Breast epithelium (tissue), 4 donors: ENCODE measurements at regions of chr2 and their contacts with region 1.

Region 1: DNA sequence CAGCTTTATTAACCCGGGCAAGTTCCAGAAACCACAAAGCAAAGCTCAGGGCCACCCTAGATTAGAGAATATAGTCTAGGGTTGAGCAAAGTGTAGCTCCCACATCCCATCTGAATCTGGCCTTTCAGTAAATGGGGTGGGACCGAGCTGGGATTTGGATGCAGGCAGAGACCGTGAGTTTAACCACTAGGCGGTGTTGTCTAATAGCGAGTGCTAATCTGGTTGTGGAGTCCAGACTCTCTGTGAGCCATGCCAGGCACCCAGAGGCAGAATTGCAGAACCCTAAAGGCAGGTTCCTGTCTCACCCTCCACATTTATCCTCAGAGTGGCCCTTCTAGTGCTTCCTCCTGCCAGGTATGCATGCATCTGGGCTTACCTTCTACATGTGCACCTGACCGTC is 435.9 kb downstream of the TSN start:
- DNase-seq: no peak
- H3K4me3 ChIP-seq: no peak overlapping the region
- H3K27ac ChIP-seq: no peak overlapping the region
- H3K4me1 ChIP-seq: no peaks in the 10 kb centered on the region
- H3K27me3 ChIP-seq: no peaks in the 10 kb centered on the region
- CTCF ChIP-seq: no peak
- POLR2A ChIP-seq: no peak

Region 2: GRCh38 chr2:121839584-121839983 is 351.8 kb before region 1 on chr2:
- intact Hi-C with region 1: loop called (anchors 5 kb)
- DNase-seq: no peak
- H3K4me3 ChIP-seq: no peak overlapping the region
- H3K27ac ChIP-seq: no peak overlapping the region
- H3K4me1 ChIP-seq: no peaks in the 10 kb centered on the region
- H3K27me3 ChIP-seq: no peaks in the 10 kb centered on the region
- CTCF ChIP-seq: no peak
- POLR2A ChIP-seq: no peak

Region 3: GRCh38 chr2:123546353-123546752 is 1355.0 kb after region 1 on chr2:
- intact Hi-C with region 1: loop called (anchors 5 kb)
- DNase-seq: no peak
- H3K4me3 ChIP-seq: no peak overlapping the region
- H3K27ac ChIP-seq: no peak overlapping the region
- H3K4me1 ChIP-seq: no peaks in the 10 kb centered on the region
- H3K27me3 ChIP-seq: no peaks in the 10 kb centered on the region
- CTCF ChIP-seq: no peak
- POLR2A ChIP-seq: no peak

Region 4: DNA sequence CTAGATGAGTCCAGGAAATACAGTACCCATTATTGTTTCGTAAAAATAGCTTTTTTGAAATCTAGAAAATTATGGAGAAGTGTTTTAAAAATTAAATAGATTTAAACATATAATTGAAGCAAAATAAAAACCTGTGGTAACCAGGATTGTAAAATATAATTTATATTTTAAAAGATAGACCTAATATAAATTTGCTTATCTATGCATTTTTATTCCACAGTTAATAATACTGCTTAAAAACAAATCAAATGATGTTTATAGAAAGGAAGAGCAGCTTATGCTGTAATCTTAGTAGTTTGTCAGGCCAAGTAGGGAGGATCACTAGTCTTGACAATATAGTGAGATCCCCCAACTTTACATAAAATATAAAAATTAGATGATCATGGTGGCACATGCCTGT is 1444.9 kb after region 1 on chr2:
- intact Hi-C with region 1: loop called (anchors 10 kb)
- DNase-seq: no peak
- H3K4me3 ChIP-seq: no peak overlapping the region
- H3K27ac ChIP-seq: no peak overlapping the region
- H3K4me1 ChIP-seq: no peaks in the 10 kb centered on the region
- H3K27me3 ChIP-seq: no peaks in the 10 kb centered on the region
- CTCF ChIP-seq: no peak
- POLR2A ChIP-seq: no peak